Psoas muscle (tissue), 8 donors: ENCODE measurements at regions of chr9 and their contacts with region 1.

Region 1: GRCh38 chr9:128771745-128772519 is at the start of gene ZER1:
- DNase-seq: peak; percentile 95 to 97
- ATAC-seq: peak; percentile 97 to 99 (median 98)
- H3K4me3 ChIP-seq: peak within 1 kb of the TSS; percentile 84
- H3K27ac ChIP-seq: peak within 1 kb of the TSS; percentile 99
- H3K4me1 ChIP-seq: peaks cover 15% of the 10 kb centered on the region
- H3K27me3 ChIP-seq: no peaks in the 10 kb centered on the region
- CTCF ChIP-seq: no peak
- total RNA-seq, gene ZER1: 40.3 to 67.2 (median 65.0) TPM

Region 2: GRCh38 chr9:128702445-128702948 is 69.4 kb before region 1 on chr9 and contains the start of gene PKN3:
- intact Hi-C with region 1: loop called in 1 of 2 experiments (anchors 5 kb)
- DNase-seq: peak; percentile 90 to 93
- ATAC-seq: peak; percentile 79 to 91 (median 86)
- H3K4me3 ChIP-seq: peak within 1 kb of the TSS; percentile 84
- H3K27ac ChIP-seq: peak within 1 kb of the TSS; percentile 65
- H3K4me1 ChIP-seq: no peaks in the 10 kb centered on the region
- H3K27me3 ChIP-seq: no peaks in the 10 kb centered on the region
- CTCF ChIP-seq: peak; percentile 80
- total RNA-seq, gene PKN3: 2.6 to 5.0 (median 3.4) TPM

Region 3: GRCh38 chr9:128723866-128724743 is 47.8 kb before region 1 on chr9 and contains the start of gene ZDHHC12:
- intact Hi-C with region 1: loop called in 1 of 2 experiments (anchors 5 kb)
- DNase-seq: peak; percentile 97
- ATAC-seq: peak; percentile 96 to 97 (median 97)
- H3K4me3 ChIP-seq: peak within 1 kb of the TSS; percentile 65
- H3K27ac ChIP-seq: peak within 1 kb of the TSS; percentile 37
- H3K4me1 ChIP-seq: peaks cover 8% of the 10 kb centered on the region
- H3K27me3 ChIP-seq: no peaks in the 10 kb centered on the region
- CTCF ChIP-seq: no peak
- total RNA-seq, gene ZDHHC12: 4.5 to 7.2 (median 5.0) TPM

Region 4: DNA sequence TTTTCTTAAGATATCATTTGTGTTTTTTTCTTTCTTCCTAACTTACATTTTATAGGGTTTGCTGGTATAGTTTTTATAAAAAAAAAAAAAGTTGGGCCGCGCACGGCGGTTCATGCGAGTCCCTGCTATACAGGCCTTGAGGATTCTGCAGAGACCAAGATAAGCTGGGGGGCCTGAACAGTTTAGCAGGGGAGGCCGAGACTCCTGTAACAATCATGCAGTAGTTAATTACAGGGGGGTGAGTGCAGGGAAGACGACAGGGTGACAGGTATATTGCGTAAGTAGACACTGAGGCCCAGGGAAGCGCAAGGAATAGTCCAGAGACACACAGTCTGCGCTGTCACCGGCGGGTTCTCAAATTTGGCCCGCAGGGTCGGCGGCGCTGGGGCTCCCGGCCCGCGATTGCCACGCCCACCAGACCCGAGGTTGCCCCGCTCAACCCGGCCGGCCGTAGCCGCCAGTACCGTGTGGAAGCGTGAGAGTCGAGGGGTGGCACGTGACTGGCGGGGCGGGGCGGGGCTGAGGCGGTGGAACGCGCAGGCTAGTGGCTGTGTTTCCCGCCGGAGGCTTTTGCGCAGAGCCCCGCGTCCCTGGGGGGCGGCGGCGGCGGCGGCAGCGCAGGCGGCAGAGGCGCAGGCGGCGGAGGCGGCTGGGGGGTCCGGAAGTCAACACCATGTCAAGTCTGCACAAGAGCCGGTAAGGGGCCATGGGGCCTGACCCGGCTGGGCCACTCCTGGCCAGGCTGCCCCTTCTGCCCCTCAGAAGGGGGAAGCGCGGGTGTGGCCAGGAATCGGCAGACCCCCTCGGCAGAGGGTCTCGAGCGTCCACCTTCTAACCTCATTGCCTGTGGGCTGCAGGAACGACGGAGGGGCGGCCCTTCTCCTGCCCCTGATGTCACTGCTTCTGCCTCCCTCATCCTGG is 15.0 kb after region 1 on chr9 and contains the start of gene TBC1D13:
- intact Hi-C with region 1: loop called in 1 of 2 experiments (anchors 2 kb)
- DNase-seq: peak; percentile 92 to 95
- ATAC-seq: peak; percentile 94 to 97 (median 96)
- H3K4me3 ChIP-seq: peak within 1 kb of the TSS; percentile 98
- H3K27ac ChIP-seq: peak within 1 kb of the TSS; percentile 90
- H3K4me1 ChIP-seq: peaks cover 21% of the 10 kb centered on the region
- H3K27me3 ChIP-seq: no peaks in the 10 kb centered on the region
- CTCF ChIP-seq: no peak
- total RNA-seq, gene TBC1D13: 14.4 to 17.5 (median 15.8) TPM

Region 5: GRCh38 chr9:128829477-128830251 is 57.7 kb after region 1 on chr9 and contains the start of gene SPOUT1:
- intact Hi-C with region 1: no loop called
- DNase-seq: peak; percentile 91 to 96
- ATAC-seq: peak; percentile 98 to 100 (median 99)
- H3K4me3 ChIP-seq: peak within 1 kb of the TSS; percentile 89
- H3K27ac ChIP-seq: peak within 1 kb of the TSS; percentile 86
- H3K4me1 ChIP-seq: peaks cover 13% of the 10 kb centered on the region
- H3K27me3 ChIP-seq: no peaks in the 10 kb centered on the region
- CTCF ChIP-seq: no peak
- total RNA-seq, gene SPOUT1: 13.3 to 33.0 (median 20.6) TPM